Mammary epithelial cell (primary cell): ENCODE measurements at regions of chr13 and their contacts with region 1.

Region 1: DNA sequence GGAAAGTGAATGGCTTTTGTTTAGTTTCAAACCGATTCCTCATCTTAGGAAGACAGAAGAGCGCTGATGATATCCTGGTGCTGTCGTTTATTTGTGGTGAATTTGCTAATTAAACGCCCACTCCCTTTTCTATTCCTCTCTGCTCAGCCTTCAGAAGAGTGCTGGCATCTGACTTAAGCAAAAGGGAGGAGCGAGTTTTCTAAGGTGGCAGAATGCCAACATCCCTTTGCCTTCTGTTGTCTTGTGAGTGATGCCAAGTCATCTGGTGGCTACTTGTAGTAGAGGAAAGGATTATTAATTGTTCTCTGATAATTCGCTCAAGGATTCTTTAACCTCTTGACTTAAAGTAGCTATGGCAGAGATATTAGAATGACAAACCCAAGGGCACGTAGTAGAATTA is 68.1 kb downstream of the ERCC5 start:
- DNase-seq: peak; percentile 81
- H3K4me3 ChIP-seq: no peak overlapping the region
- H3K27ac ChIP-seq: peak overlapping the region; percentile 94
- H3K4me1 ChIP-seq: peaks cover 62% of the 10 kb centered on the region
- H3K27me3 ChIP-seq: no peaks in the 10 kb centered on the region
- CTCF ChIP-seq: no peak

Region 2: DNA sequence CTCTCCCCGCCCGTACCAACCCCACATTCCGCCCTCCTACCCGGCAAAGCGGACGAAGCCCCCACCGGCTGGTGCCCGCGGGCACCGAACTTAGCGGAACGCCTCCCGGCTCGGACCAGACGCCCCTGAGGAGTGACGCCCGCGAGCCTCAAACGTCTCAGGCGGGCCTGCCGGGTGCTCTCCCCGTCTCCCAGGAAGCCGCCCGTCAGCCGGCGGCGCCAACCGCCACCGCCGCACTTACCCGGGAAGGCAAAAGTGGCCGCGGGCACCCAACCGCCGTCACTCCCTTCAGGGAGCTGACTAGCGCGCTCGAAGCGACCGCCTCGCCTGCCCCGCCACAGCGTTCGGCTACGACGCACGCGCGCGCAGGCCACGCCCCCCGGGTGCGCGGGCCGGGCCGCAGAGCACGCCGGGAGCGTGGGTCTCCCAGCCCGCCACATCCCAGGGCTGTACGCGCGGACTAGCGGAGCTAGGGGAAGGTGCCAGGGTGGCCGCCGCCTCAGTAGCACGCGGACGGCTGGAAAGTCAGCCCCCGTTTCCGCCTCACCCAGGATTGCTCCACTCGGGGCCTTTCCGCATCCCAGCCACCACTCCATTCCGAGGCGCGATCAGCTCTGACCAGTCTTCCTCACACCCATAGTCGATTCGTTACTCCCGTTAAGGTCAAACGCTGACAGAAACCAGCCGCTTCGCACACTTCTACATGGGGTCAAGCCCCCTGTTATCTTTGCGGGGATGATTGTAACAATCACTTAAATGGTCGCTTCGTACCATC is 140.3 kb before region 1 on chr13 and contains the start of gene TEX30:
- CTCF ChIA-PET with region 1: no interaction called
- dilution Hi-C with region 1: no loop called
- in situ Hi-C with region 1: no loop called
- intact Hi-C with region 1: no loop called
- DNase-seq: peak; percentile 86
- H3K4me3 ChIP-seq: peak within 1 kb of the TSS; percentile 75 to 92 (median 83)
- H3K27ac ChIP-seq: peak within 1 kb of the TSS; percentile 54
- H3K4me1 ChIP-seq: peaks cover 6% of the 10 kb centered on the region
- H3K27me3 ChIP-seq: no peaks in the 10 kb centered on the region
- CTCF ChIP-seq: no peak
- total RNA-seq, gene TEX30: 10.5 to 14.2 TPM

Region 3: GRCh38 chr13:102870677-102871415 is 43.1 kb before region 1 on chr13:
- CTCF ChIA-PET with region 1: no interaction called
- dilution Hi-C with region 1: no loop called
- in situ Hi-C with region 1: no loop called
- intact Hi-C with region 1: loop called (anchors 1 kb)
- DNase-seq: peak; percentile 41
- H3K4me3 ChIP-seq: no peak overlapping the region
- H3K27ac ChIP-seq: no peak overlapping the region
- H3K4me1 ChIP-seq: peaks cover 23% of the 10 kb centered on the region
- H3K27me3 ChIP-seq: no peaks in the 10 kb centered on the region
- CTCF ChIP-seq: peak; percentile 80

Region 4: DNA sequence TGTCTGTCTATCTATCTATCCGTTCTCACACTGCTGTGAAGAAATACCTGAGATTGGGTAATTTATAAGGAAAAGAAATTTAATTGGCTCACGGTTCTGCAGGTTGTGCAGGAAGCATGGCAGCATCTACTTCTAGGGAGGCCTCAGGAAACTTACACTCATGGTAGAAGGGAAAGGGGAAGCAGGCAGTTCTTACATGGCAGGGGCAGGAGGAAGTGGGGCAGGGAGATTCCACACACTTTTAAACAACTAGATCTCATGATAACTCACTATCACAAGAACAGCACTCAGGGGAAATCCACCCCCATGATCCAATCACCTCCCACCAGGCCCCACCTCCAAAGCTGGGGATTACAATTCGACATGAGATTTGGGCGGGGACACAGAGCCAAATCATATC is 47.0 kb after region 1 on chr13:
- CTCF ChIA-PET with region 1: no interaction called
- dilution Hi-C with region 1: no loop called
- in situ Hi-C with region 1: no loop called
- intact Hi-C with region 1: no loop called
- DNase-seq: no peak
- H3K4me3 ChIP-seq: no peak overlapping the region
- H3K27ac ChIP-seq: no peak overlapping the region
- H3K4me1 ChIP-seq: peaks cover 4% of the 10 kb centered on the region
- H3K27me3 ChIP-seq: no peaks in the 10 kb centered on the region
- CTCF ChIP-seq: no peak

Region 5: GRCh38 chr13:103140001-103140671 is 226.2 kb after region 1 on chr13:
- CTCF ChIA-PET with region 1: interaction called, 7 read pairs
- dilution Hi-C with region 1: no loop called
- in situ Hi-C with region 1: loop called (anchors 25 kb)
- intact Hi-C with region 1: loop called (anchors 1 kb)
- DNase-seq: peak; percentile 33
- H3K4me3 ChIP-seq: no peak overlapping the region
- H3K27ac ChIP-seq: no peak overlapping the region
- H3K4me1 ChIP-seq: no peaks in the 10 kb centered on the region
- H3K27me3 ChIP-seq: no peaks in the 10 kb centered on the region
- CTCF ChIP-seq: peak; percentile 80 to 84

Region 6: DNA sequence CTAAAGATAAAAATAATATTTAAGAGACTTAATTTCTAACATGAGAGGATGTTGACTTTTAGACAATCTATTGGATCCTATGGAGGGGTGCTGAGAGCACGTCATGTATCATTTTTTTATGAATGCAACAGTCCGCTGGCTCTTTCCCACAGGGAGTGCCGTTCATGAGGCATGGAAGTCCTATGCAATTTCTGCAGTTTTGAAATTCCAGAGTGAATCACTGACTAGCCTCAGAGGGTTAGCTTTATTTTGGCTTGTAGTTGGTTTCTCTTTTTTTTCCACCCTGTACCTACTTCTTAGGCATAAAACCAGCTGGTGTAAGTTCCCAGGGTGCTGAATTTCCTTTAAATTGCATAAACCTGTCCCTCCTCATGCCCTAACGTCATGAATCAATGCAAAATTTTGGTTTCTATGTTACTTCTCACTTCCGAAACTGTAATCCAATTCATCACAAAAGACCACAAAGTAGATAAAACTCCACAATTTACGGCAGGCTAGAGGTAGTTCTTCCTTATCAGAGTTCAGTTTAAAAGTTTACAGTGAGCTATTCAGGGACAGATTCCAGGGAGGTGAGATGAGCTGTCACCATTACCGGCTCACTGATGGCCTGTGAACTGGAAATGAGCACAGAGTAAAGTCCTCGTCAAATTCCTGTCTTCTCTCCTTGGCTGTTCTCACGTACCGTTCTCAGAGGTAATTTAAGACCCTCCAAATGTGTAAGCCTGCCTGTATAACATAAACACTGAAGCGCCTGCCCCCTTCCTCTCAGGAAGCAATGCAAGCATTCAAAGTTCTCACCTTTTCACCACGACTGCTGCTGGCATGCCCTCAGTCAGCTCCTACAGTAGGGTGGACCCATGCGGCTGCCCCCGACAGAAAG is 368.9 kb after region 1 on chr13:
- CTCF ChIA-PET with region 1: no interaction called
- dilution Hi-C with region 1: no loop called
- in situ Hi-C with region 1: no loop called
- intact Hi-C with region 1: loop called (anchors 1 kb)
- DNase-seq: peak; percentile 97
- H3K4me3 ChIP-seq: no peak overlapping the region
- H3K27ac ChIP-seq: peak overlapping the region; percentile 96
- H3K4me1 ChIP-seq: peaks cover 19% of the 10 kb centered on the region
- H3K27me3 ChIP-seq: no peaks in the 10 kb centered on the region
- CTCF ChIP-seq: peak in 1 of 2 donors; percentile 14

Region 7: DNA sequence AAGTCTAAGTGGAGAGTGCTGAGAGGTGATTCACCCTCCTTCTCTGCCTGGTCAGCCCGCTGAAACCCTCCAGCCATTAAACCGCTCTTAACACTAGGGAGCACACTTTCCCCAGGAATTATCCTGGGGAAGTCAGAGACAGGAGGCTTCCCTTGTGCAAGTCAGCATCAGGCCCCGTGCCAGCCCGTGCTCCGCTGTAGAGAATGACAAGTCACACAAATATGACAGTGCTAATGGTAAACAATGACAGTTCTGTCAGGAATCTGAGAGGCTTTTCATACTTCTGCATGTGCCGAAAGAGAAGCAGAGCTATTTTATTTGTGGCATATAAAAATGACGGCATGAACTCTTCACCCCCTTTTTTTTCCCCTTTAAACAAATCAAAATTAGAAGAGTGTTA is 969.2 kb after region 1 on chr13:
- CTCF ChIA-PET with region 1: no interaction called
- dilution Hi-C with region 1: no loop called
- in situ Hi-C with region 1: no loop called
- intact Hi-C with region 1: loop called (anchors 5 kb)
- DNase-seq: peak; percentile 89
- H3K4me3 ChIP-seq: no peak overlapping the region
- H3K27ac ChIP-seq: no peak overlapping the region
- H3K4me1 ChIP-seq: peaks cover 2% of the 10 kb centered on the region
- H3K27me3 ChIP-seq: no peaks in the 10 kb centered on the region
- CTCF ChIP-seq: peak; percentile 46 to 67